ENCODE measurements at regions of chr6 and their contacts with region 1.

Region 1: GRCh38 chr6:17673543-17674254 is 33.0 kb downstream of the NUP153 start:
- DNase-seq: no peak
- H3K4me3 ChIP-seq: no peak overlapping the region
- H3K4me3 Mint-ChIP-seq: no peak overlapping the region
- H3K27ac ChIP-seq: no peak overlapping the region
- H3K27ac Mint-ChIP-seq: peak overlapping the region in 6 of 7 donors; percentile 2 to 84 (median 50)
- H3K4me1 ChIP-seq: peaks cover 22% of the 10 kb centered on the region
- H3K4me1 Mint-ChIP-seq: peaks cover 19 to 47% (median 27%) of the 10 kb centered on the region in 4 donors
- H3K27me3 ChIP-seq: no peaks in the 10 kb centered on the region
- H3K27me3 Mint-ChIP-seq: no peaks in the 10 kb centered on the region

Region 2: GRCh38 chr6:17519120-17519519 is 154.6 kb before region 1 on chr6:
- CTCF ChIA-PET with region 1: no interaction called
- POLR2A ChIA-PET with region 1: no interaction called
- intact Hi-C with region 1: no loop called
- DNase-seq: no peak
- H3K4me3 ChIP-seq: no peak overlapping the region
- H3K4me3 Mint-ChIP-seq: no peak overlapping the region
- H3K27ac ChIP-seq: no peak overlapping the region
- H3K27ac Mint-ChIP-seq: no peak overlapping the region
- H3K4me1 ChIP-seq: no peaks in the 10 kb centered on the region
- H3K4me1 Mint-ChIP-seq: no peaks in the 10 kb centered on the region
- H3K27me3 ChIP-seq: peaks cover 7% of the 10 kb centered on the region
- H3K27me3 Mint-ChIP-seq: peaks cover 7 to 8% of the 10 kb centered on the region in 2 donors

Region 3: GRCh38 chr6:17656092-17656491 is 17.6 kb before region 1 on chr6:
- CTCF ChIA-PET with region 1: no interaction called
- POLR2A ChIA-PET with region 1: no interaction called
- intact Hi-C with region 1: loop called (anchors 2 kb)
- DNase-seq: no peak
- H3K4me3 ChIP-seq: no peak overlapping the region
- H3K4me3 Mint-ChIP-seq: no peak overlapping the region
- H3K27ac ChIP-seq: no peak overlapping the region
- H3K27ac Mint-ChIP-seq: peak overlapping the region in 3 of 7 donors; percentile 55 to 89 (median 72)
- H3K4me1 ChIP-seq: peaks cover 4% of the 10 kb centered on the region
- H3K4me1 Mint-ChIP-seq: peaks cover 4 to 21% (median 8%) of the 10 kb centered on the region in 4 donors
- H3K27me3 ChIP-seq: no peaks in the 10 kb centered on the region
- H3K27me3 Mint-ChIP-seq: no peaks in the 10 kb centered on the region

Measured in CD4-positive, alpha-beta memory T cell (primary cell).